Endothelial cell of umbilical vein (primary cell): ENCODE measurements at regions of chr12 and their contacts with region 1.

Region 1: GRCh38 chr12:80269803-80270552 is 170.6 kb downstream of the OTOGL start:
- DNase-seq: peak; percentile 69
- H3K4me3 ChIP-seq: no peak overlapping the region
- H3K27ac ChIP-seq: peak overlapping the region; percentile 81
- H3K4me1 ChIP-seq: peaks cover 18% of the 10 kb centered on the region
- H3K27me3 ChIP-seq: no peaks in the 10 kb centered on the region
- CTCF ChIP-seq: peak; percentile 46 to 47
- POLR2A ChIP-seq: no peak

Region 2: DNA sequence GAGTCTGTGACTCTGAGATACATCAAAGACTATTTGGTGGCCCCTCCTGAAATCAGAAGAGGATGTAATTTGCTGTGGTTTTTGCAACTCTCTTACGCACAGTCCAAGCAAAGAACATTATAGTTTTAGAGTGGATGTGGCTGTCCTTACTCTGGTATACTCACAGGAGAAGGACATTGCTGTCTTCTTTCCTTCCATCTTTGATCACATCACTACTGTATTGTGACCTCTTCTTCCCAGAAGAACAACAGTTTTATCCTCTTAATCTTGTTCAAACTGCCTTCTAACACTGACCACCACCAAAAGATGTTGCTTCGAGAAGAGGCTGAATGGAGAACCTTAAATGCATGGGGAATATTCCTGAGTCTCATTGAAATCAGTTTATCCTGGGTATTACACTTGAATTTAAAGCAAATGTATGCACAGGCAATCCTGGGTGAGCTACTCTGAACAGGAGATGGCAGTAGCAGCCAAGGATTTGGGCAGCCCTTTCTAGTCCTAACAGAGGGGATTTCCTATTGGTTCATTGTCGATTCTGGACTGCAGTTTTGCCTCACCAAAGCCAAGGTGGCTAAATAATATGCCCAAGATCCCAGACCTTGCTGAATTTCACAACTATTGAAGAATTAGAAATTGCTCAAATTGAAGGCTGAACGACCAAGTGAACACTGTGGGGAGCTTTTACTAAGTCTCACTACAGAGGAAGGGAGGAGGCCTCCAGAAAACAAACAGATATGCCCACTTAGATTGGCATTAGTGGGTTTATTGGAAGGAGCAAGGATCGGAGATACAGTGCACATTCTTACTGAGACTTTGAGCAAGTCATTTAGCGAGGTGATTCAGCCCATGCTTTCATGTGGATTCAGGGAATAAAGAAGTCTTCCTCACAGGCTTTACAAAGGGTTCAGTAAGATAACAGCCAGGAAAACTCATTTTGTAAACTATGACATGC is 862.0 kb before region 1 on chr12:
- CTCF ChIA-PET with region 1: interaction called, 17 read pairs
- POLR2A ChIA-PET with region 1: no interaction called
- dilution Hi-C with region 1: no loop called
- intact Hi-C with region 1: loop called (anchors 1 kb)
- DNase-seq: peak; percentile 88
- H3K4me3 ChIP-seq: no peak overlapping the region
- H3K27ac ChIP-seq: peak overlapping the region; percentile 25
- H3K4me1 ChIP-seq: peaks cover 9% of the 10 kb centered on the region
- H3K27me3 ChIP-seq: no peaks in the 10 kb centered on the region
- CTCF ChIP-seq: peak; percentile 72 to 86
- POLR2A ChIP-seq: no peak

Region 3: DNA sequence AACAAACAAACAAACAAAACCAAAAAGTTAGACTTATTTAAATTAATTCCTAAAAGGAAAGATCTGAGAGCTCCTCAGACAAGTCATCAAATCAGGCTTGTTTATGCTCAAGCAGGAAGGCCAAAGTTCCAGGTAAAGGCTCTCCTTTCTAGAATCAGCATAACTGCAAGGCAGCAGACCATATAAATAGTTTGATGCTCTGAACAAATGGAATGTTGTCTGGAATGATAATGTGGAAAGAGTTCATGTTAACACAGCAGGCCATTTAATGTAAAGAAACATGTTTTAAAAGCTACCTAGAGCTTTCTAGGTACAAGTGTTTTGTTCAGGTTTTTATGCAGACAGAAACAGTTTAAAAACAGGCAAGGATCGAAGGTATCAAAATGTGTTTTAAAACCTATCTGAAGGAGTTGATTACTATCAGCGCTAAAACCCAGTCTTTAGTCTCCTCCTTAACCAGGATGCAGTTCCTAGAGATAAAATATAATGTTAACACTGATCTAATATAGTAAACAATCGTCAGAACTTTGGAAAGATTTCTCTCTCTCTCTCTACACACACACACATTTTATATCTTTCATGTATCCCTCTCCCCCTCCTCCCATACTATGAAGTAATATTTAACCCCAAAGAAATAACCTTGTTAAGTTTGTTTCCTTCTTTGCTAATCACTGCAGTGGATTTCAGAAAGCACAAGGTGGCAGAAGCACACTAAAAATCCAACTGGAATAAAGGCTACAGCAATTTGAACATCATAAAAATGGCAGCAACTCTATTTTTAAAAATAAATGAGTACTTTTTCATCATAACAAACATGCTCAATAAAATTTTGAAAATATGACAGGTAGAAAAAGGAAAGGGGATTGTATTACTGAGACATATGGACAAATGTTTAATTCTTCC is 714.7 kb before region 1 on chr12:
- CTCF ChIA-PET with region 1: interaction called, 3 read pairs
- POLR2A ChIA-PET with region 1: no interaction called
- dilution Hi-C with region 1: no loop called
- intact Hi-C with region 1: loop called (anchors 2 kb)
- DNase-seq: peak; percentile 79
- H3K4me3 ChIP-seq: no peak overlapping the region
- H3K27ac ChIP-seq: no peak overlapping the region
- H3K4me1 ChIP-seq: peaks cover 56% of the 10 kb centered on the region
- H3K27me3 ChIP-seq: no peaks in the 10 kb centered on the region
- CTCF ChIP-seq: peak; percentile 43 to 48
- POLR2A ChIP-seq: no peak

Region 4: DNA sequence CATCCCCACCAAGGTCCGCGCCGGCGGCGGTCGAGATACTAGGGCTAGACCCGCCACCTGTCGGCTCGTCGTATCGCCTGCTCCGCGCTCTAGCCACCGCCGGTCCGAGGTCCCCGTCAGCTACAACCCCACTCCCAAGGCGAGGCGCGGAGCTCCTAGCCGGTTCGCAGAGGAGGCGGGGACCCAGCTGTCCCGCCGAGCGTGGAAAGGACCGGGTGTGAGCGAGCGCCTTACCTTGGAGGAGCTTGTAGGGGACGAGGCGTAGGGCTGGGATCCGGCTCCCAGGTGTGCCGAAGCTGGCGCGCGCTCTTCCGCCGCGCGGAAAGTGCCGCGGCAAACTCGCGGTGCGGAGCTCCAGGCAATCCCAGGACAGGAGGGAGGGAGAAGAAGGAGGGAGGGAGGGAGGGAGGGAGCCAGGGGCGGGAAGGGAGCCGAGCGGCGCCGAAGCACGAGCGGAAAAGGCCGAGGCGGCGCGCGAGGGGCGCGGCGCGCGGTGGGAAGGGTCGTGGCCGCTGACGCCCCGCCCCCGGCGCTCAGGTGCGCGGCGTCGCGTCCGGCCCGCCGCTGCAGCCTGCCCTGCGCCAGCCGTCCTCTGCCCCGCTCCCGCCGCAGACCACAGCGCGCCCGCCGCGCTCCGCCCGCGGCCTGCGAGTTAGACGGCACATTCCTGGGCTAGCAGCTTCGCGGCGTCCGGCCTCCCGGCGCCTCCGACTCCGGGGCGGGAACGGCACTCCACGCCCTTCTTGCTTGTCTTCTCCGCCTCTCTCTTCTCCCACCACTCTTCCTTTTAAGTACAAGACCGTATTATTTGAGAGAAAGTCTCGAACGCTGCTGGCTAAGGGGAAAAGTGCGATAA is 579.1 kb before region 1 on chr12 and contains the start of gene PAWR:
- CTCF ChIA-PET with region 1: no interaction called
- POLR2A ChIA-PET with region 1: no interaction called
- dilution Hi-C with region 1: no loop called
- intact Hi-C with region 1: no loop called
- DNase-seq: peak; percentile 83
- H3K4me3 ChIP-seq: peak within 1 kb of the TSS; percentile 85 to 96 (median 88)
- H3K27ac ChIP-seq: peak within 1 kb of the TSS; percentile 85
- H3K4me1 ChIP-seq: peaks cover 28% of the 10 kb centered on the region
- H3K27me3 ChIP-seq: no peaks in the 10 kb centered on the region
- CTCF ChIP-seq: peak in 1 of 2 donors; percentile 37
- POLR2A ChIP-seq: peak; percentile 21
- total RNA-seq, gene PAWR: 154 and 175 TPM in 2 replicates

Region 5: DNA sequence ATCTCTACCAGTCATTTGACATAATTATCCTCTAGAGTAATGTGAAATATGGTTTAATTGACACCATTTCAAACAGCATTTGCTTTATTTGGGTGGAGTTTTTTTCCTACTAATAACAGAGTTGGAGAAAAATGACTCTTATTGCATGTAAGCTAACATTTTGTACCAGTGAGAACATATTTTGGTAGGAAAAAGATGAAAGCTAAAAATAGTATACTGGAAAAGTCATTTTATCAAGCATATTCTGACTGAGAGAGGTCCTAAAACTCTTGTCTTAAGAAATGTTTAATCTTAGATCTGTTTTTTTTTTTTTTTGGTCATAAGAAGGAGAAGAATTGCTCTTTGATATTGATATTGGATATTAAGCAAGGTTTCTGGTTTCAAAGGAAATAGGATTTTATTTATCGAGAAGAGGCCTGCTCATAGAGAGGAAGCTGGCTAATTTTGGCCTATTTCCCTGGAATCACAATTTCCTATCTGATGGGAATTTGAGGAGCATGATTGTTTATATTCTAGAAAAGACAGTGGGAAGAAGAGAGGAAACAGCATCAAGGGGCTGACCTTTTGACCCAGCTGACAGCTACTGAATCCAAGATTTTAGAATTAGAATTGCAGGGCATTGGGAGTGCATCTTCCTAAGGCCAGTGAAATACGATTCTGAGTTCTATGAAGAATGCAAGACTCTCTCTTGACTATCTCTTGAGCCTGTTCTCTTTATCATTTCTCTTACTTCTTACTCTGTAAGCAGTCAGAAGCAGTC is 151.2 kb before region 1 on chr12:
- CTCF ChIA-PET with region 1: no interaction called
- POLR2A ChIA-PET with region 1: no interaction called
- dilution Hi-C with region 1: no loop called
- intact Hi-C with region 1: no loop called
- DNase-seq: peak; percentile 12
- H3K4me3 ChIP-seq: no peak overlapping the region
- H3K27ac ChIP-seq: no peak overlapping the region
- H3K4me1 ChIP-seq: no peaks in the 10 kb centered on the region
- H3K27me3 ChIP-seq: no peaks in the 10 kb centered on the region
- CTCF ChIP-seq: no peak
- POLR2A ChIP-seq: no peak

Region 6: GRCh38 chr12:80142640-80143039 is 127.3 kb before region 1 on chr12:
- CTCF ChIA-PET with region 1: no interaction called
- POLR2A ChIA-PET with region 1: no interaction called
- dilution Hi-C with region 1: no loop called
- intact Hi-C with region 1: no loop called
- DNase-seq: no peak
- H3K4me3 ChIP-seq: no peak overlapping the region
- H3K27ac ChIP-seq: no peak overlapping the region
- H3K4me1 ChIP-seq: no peaks in the 10 kb centered on the region
- H3K27me3 ChIP-seq: peaks cover 0 to 5% of the 10 kb centered on the region in 2 experiments
- CTCF ChIP-seq: no peak
- POLR2A ChIP-seq: no peak

Region 7: DNA sequence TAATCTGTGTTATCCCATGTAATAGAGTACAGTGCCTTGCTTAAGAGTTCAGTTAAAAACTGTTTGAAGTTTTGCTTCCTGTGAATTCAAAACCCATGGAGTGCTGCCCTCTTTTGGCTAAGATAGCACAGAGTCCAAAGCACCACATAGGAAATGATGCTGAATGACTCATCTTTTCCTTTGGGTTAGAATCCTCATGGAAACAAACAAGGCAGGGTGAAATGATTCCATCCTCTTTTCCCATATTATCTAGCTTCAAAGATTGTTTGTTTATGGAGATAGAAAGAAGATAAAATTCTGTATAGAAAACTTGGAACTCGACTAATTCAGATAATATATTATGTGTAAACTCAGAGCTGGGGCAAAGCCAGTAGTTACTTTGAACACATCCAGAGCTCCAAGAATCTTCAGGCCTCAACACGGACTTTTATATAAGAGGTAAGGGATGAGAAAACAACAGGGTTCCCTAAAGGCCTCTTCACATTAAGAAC is 83.2 kb before region 1 on chr12:
- CTCF ChIA-PET with region 1: interaction called, 100 read pairs
- POLR2A ChIA-PET with region 1: no interaction called
- dilution Hi-C with region 1: no loop called
- intact Hi-C with region 1: no loop called
- DNase-seq: peak; percentile 97
- H3K4me3 ChIP-seq: no peak overlapping the region
- H3K27ac ChIP-seq: peak overlapping the region; percentile 92
- H3K4me1 ChIP-seq: peaks cover 19% of the 10 kb centered on the region
- H3K27me3 ChIP-seq: no peaks in the 10 kb centered on the region
- CTCF ChIP-seq: peak; percentile 63 to 78
- POLR2A ChIP-seq: no peak

Region 8: DNA sequence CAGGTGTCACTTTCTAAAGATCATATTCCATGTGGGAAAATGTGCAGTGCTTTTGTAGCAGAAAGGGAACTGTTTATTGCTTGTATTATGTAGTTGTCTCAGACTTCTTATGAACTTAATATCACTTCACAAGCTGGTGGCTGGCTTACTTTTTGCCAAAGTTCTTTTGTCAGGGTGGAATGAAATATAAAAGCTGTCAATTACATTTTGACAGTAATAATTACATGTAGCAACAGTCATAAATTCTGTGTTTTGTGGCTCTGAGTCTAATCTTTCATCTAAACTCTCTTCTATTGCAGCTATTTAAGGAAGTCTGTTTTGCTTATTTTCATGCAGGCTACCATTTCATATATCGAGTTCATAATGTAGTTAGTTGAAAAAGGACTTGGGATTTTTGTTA is 64.0 kb before region 1 on chr12:
- CTCF ChIA-PET with region 1: interaction called, 89 read pairs
- POLR2A ChIA-PET with region 1: no interaction called
- dilution Hi-C with region 1: no loop called
- intact Hi-C with region 1: no loop called
- DNase-seq: no peak
- H3K4me3 ChIP-seq: no peak overlapping the region
- H3K27ac ChIP-seq: no peak overlapping the region
- H3K4me1 ChIP-seq: no peaks in the 10 kb centered on the region
- H3K27me3 ChIP-seq: no peaks in the 10 kb centered on the region
- CTCF ChIP-seq: no peak
- POLR2A ChIP-seq: no peak

Region 9: GRCh38 chr12:80241576-80242273 is 28.3 kb before region 1 on chr12:
- CTCF ChIA-PET with region 1: interaction called, 4 read pairs
- POLR2A ChIA-PET with region 1: no interaction called
- dilution Hi-C with region 1: no loop called
- intact Hi-C with region 1: loop called (anchors 2 kb)
- DNase-seq: peak; percentile 67
- H3K4me3 ChIP-seq: peak overlapping the region in 1 of 3 experiments; percentile 33
- H3K27ac ChIP-seq: peak overlapping the region; percentile 74
- H3K4me1 ChIP-seq: peaks cover 22% of the 10 kb centered on the region
- H3K27me3 ChIP-seq: no peaks in the 10 kb centered on the region
- CTCF ChIP-seq: no peak
- POLR2A ChIP-seq: no peak

Region 10: DNA sequence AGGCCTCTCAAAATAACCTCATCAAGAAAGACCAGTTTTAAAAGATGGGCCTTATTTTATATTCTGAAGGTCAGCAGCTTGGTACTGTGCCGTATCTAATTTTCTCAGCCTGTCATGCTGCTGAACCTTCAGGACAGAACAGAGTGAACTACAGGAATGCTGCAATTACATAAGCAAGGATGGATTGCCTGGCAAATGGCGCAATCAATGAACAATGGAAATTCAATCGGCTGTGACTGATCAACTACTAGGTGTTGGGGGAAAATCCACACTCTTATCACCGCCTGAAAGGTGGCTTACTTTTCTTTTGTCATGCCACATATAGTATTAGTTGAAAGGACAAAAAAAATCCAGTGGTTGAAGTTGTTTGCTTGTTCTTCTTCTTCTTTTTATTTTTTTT is 816.4 kb after region 1 on chr12:
- CTCF ChIA-PET with region 1: no interaction called
- POLR2A ChIA-PET with region 1: no interaction called
- dilution Hi-C with region 1: no loop called
- intact Hi-C with region 1: no loop called
- DNase-seq: no peak
- H3K4me3 ChIP-seq: no peak overlapping the region
- H3K27ac ChIP-seq: no peak overlapping the region
- H3K4me1 ChIP-seq: no peaks in the 10 kb centered on the region
- H3K27me3 ChIP-seq: no peaks in the 10 kb centered on the region
- CTCF ChIP-seq: no peak
- POLR2A ChIP-seq: no peak

Region 11: DNA sequence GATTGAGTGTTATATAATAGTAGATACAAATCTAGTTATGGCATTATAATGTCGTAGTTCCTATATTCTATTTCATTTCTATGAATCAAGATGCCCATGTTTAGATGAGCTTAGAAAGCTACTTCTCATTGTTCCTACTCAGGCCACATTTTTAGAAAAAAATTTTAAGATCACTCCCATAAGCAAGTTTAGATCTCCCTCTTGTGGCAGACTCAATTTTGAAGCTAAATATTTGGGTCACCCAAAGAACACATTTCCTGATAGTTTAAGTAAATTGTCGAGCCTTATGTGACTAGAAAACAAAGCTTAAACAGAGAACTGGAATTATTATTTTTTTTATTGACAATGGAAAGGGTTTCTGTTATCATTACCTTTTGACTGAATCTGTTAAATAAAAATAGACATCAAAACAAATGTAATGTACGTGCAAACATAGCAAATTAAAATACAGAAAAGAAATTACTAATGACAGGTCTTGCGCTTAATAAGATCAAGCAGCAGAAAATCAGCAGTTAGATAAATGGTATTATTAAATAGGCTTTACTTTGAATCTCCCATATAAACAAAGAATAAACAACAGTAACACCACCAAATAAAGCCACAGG is 988.1 kb after region 1 on chr12:
- CTCF ChIA-PET with region 1: interaction called, 16 read pairs
- POLR2A ChIA-PET with region 1: no interaction called
- dilution Hi-C with region 1: no loop called
- intact Hi-C with region 1: no loop called
- DNase-seq: peak; percentile 66
- H3K4me3 ChIP-seq: no peak overlapping the region
- H3K27ac ChIP-seq: no peak overlapping the region
- H3K4me1 ChIP-seq: peaks cover 2% of the 10 kb centered on the region
- H3K27me3 ChIP-seq: peaks cover 0 to 3% of the 10 kb centered on the region in 2 experiments
- CTCF ChIP-seq: peak; percentile 13 to 40
- POLR2A ChIP-seq: no peak